ENCODE measurements at regions of chr11 and their contacts with region 1.

Region 1: GRCh38 chr11:73982969-73983740 is 512 bp upstream of the UCP2 start:
- DNase-seq: peak; percentile 83 to 97 (median 92)
- ATAC-seq: peak; percentile 77
- H3K4me3 ChIP-seq: peak overlapping the region; percentile 78 to 100
- H3K4me3 Mint-ChIP-seq: peak overlapping the region; percentile 100
- H3K27ac ChIP-seq: peak overlapping the region; percentile 95 to 99
- H3K27ac Mint-ChIP-seq: peak overlapping the region; percentile 99
- H3K4me1 ChIP-seq: peaks cover 36% of the 10 kb centered on the region
- H3K4me1 Mint-ChIP-seq: peaks cover 48% of the 10 kb centered on the region
- H3K27me3 ChIP-seq: no peaks in the 10 kb centered on the region
- H3K27me3 Mint-ChIP-seq: no peaks in the 10 kb centered on the region
- CTCF ChIP-seq: no peak

Region 2: DNA sequence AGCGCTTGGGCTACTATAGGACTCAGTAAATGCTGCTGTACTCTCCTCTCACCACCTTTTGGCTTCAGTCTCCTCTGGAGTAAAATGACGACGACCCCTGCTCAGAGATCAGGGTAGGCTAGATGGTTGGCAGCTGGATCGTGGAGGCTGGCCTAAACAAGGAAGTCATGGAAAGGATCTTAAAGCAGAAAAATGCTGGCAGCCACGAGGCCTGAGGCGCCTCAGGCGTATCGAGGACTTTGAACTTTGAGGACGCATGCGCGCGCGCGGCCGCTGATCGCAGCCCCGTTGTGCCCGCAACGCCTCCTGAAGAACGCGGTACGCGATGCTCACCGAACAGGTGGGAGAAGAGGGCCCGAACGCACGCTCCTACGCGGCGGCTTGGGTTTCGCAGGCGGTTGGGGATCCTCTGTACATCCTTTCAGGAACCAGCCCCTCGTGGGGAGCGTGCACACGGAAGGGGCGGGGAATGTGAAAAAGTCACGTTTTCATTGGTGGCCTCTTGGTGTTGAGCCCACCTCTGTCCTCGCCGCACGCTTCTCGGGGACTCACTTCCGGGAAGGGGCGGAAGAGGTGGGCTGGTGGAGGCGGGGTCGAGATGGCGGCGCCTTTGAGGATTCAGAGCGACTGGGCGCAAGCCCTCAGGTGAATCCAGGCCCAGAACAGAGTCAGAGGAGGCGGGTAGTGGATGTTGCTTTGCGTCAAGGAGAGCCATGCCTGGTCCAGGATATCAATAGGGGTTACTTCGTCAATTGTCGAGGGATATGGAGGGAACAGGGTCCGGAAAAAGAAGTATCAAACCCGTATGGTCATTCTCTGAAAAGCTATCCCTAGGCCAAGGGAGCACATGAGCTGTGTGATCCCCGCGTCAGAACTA is 106.5 kb before region 1 on chr11 and contains the starts of genes COA4 and PAAF1:
- CTCF ChIA-PET with region 1: no interaction called
- POLR2A ChIA-PET with region 1: no interaction called
- intact Hi-C with region 1: loop called in 1 of 2 experiments (anchors 2 kb)
- DNase-seq: peak; percentile 81 to 98 (median 92)
- ATAC-seq: peak; percentile 96
- H3K4me3 ChIP-seq: peak within 1 kb of the TSS; percentile 75 to 79
- H3K4me3 Mint-ChIP-seq: peak within 1 kb of the TSS; percentile 97
- H3K27ac ChIP-seq: peak within 1 kb of the TSS; percentile 79 to 81
- H3K27ac Mint-ChIP-seq: peak within 1 kb of the TSS; percentile 98
- H3K4me1 ChIP-seq: peaks cover 21% of the 10 kb centered on the region
- H3K4me1 Mint-ChIP-seq: peaks cover 42% of the 10 kb centered on the region
- H3K27me3 ChIP-seq: no peaks in the 10 kb centered on the region
- H3K27me3 Mint-ChIP-seq: no peaks in the 10 kb centered on the region
- CTCF ChIP-seq: no peak
- total RNA-seq, gene COA4: 22.0 to 25.1 TPM
- total RNA-seq, gene PAAF1: 6.2 to 6.4 TPM

Region 3: GRCh38 chr11:73931039-73931645 is 52.0 kb before region 1 on chr11:
- CTCF ChIA-PET with region 1: no interaction called
- POLR2A ChIA-PET with region 1: no interaction called
- intact Hi-C with region 1: no loop called
- DNase-seq: peak in 2 of 9 experiments; percentile 24 to 32
- ATAC-seq: no peak
- H3K4me3 ChIP-seq: no peak overlapping the region
- H3K4me3 Mint-ChIP-seq: no peak overlapping the region
- H3K27ac ChIP-seq: no peak overlapping the region
- H3K27ac Mint-ChIP-seq: peak overlapping the region; percentile 27
- H3K4me1 ChIP-seq: no peaks in the 10 kb centered on the region
- H3K4me1 Mint-ChIP-seq: no peaks in the 10 kb centered on the region
- H3K27me3 ChIP-seq: no peaks in the 10 kb centered on the region
- H3K27me3 Mint-ChIP-seq: no peaks in the 10 kb centered on the region
- CTCF ChIP-seq: no peak

Region 4: DNA sequence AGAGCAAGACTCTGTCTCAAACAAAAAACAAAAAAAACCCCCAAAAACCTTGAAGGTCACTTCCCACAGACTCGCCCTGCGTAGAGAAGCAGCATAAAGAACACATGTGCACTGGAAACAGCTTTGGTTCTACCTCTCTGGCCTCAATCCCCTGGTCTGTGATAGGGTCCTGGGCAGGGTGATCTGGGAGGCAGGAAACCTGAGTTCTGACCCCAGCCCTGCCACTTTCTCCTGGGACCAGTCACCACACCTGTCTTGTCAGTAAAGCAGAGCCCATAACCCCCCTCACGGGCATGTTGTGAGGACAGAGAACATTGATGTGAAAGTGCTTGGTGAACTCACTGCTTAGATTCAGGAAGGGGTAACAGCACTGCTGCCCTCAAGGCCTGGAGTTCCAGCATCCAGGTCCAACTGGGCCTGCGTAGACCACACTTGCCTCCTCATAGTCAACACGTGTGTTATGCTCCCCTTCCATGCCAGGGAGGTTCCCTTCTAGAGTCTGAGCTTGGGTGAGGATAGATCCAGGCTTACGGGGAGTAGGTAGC is 11.9 kb before region 1 on chr11:
- CTCF ChIA-PET with region 1: interaction called, 23 read pairs
- POLR2A ChIA-PET with region 1: interaction called, 283 read pairs
- intact Hi-C with region 1: loop called in 1 of 2 experiments (anchors 1 kb)
- DNase-seq: peak in 4 of 9 experiments; percentile 26 to 48 (median 40)
- ATAC-seq: no peak
- H3K4me3 ChIP-seq: no peak overlapping the region
- H3K4me3 Mint-ChIP-seq: no peak overlapping the region
- H3K27ac ChIP-seq: peak overlapping the region in 1 of 2 experiments; percentile 79
- H3K27ac Mint-ChIP-seq: peak overlapping the region; percentile 99
- H3K4me1 ChIP-seq: peaks cover 90% of the 10 kb centered on the region
- H3K4me1 Mint-ChIP-seq: peaks cover 88% of the 10 kb centered on the region
- H3K27me3 ChIP-seq: no peaks in the 10 kb centered on the region
- H3K27me3 Mint-ChIP-seq: no peaks in the 10 kb centered on the region
- CTCF ChIP-seq: no peak

Region 5: GRCh38 chr11:74004759-74005615 is 21.8 kb after region 1 on chr11:
- CTCF ChIA-PET with region 1: interaction called, 24 read pairs
- POLR2A ChIA-PET with region 1: interaction called, 428 read pairs
- intact Hi-C with region 1: loop called (anchors 1 kb)
- DNase-seq: peak; percentile 71 to 96 (median 88)
- ATAC-seq: peak; percentile 99
- H3K4me3 ChIP-seq: peak overlapping the region; percentile 20 to 36
- H3K4me3 Mint-ChIP-seq: peak overlapping the region; percentile 79
- H3K27ac ChIP-seq: peak overlapping the region; percentile 68 to 77
- H3K27ac Mint-ChIP-seq: peak overlapping the region; percentile 95
- H3K4me1 ChIP-seq: peaks cover 72% of the 10 kb centered on the region
- H3K4me1 Mint-ChIP-seq: peaks cover 77% of the 10 kb centered on the region
- H3K27me3 ChIP-seq: no peaks in the 10 kb centered on the region
- H3K27me3 Mint-ChIP-seq: no peaks in the 10 kb centered on the region
- CTCF ChIP-seq: no peak

Region 6: DNA sequence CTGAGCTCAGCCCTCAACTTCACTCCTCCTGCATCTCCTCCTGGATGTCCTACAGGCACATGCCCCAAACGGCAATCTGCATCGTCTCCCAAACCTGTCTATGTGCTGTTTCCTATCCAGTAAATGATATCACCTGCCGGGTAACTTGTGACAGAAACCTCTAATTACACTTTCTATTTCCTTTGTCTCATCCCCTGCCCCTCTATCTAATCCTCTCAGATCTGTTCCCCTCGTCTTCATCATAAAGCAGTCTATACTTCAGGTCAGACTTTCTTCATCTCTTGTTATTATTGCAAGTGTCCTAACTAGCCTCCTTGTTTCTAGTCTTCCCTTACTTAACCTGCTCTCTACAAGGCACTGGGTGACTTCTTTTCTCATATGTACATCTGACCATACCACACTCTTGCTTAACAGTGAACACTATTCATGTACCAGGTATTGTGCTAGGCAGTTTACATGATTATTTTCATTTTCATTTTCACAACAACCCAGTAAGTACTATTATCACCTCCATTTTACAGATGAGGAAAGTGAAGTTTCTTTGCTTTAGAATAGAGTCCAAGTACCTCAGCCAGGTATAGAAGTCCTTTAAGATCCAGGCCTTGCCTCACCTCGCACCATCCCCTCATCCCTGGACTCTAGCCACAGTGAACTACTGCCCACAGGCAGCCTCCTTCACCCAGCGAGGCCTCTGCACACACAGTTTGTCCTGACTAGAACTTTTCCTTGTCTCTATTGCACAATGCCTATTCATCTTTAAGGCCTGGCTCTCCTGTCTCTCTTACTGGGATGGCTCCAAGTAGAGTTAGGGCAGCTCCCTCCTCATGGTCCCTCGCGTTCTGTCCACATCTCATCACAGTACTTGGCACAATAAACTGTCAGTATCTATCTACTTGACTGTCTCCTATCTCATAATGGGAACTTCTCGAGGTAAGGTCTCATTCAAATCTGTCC is 47.8 kb after region 1 on chr11:
- CTCF ChIA-PET with region 1: interaction called, 29 read pairs
- POLR2A ChIA-PET with region 1: interaction called, 12 read pairs
- intact Hi-C with region 1: loop called in 1 of 2 experiments (anchors 5 kb)
- DNase-seq: peak in 1 of 9 experiments; percentile 36
- ATAC-seq: peak; percentile 33
- H3K4me3 ChIP-seq: no peak overlapping the region
- H3K4me3 Mint-ChIP-seq: peak overlapping the region; percentile 24
- H3K27ac ChIP-seq: peak overlapping the region in 1 of 2 experiments; percentile 64
- H3K27ac Mint-ChIP-seq: peak overlapping the region; percentile 60
- H3K4me1 ChIP-seq: peaks cover 7% of the 10 kb centered on the region
- H3K4me1 Mint-ChIP-seq: peaks cover 25% of the 10 kb centered on the region
- H3K27me3 ChIP-seq: no peaks in the 10 kb centered on the region
- H3K27me3 Mint-ChIP-seq: no peaks in the 10 kb centered on the region
- CTCF ChIP-seq: no peak

Region 7: DNA sequence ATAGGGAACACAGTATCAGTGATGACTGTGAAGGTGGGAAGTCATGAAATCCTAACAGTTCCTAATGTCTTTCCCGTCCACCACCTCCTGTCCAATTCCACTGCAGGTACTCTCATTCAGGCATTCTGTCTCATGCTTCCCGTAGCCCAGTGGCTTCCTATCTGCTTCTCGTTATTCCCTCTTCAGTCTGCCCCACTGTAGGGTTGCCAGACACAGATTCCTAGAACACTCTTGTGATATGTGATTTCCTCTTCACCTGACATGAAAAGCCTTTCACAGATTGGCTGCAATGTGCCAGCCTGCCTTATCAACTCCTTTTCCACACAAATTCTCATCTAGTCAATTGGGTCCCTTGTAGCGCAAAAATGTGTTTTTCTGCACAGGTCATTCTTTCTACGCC is 138.6 kb after region 1 on chr11:
- CTCF ChIA-PET with region 1: no interaction called
- POLR2A ChIA-PET with region 1: no interaction called
- intact Hi-C with region 1: no loop called
- DNase-seq: no peak
- ATAC-seq: no peak
- H3K4me3 ChIP-seq: no peak overlapping the region
- H3K4me3 Mint-ChIP-seq: no peak overlapping the region
- H3K27ac ChIP-seq: no peak overlapping the region
- H3K27ac Mint-ChIP-seq: no peak overlapping the region
- H3K4me1 ChIP-seq: no peaks in the 10 kb centered on the region
- H3K4me1 Mint-ChIP-seq: no peaks in the 10 kb centered on the region
- H3K27me3 ChIP-seq: no peaks in the 10 kb centered on the region
- H3K27me3 Mint-ChIP-seq: no peaks in the 10 kb centered on the region
- CTCF ChIP-seq: no peak